Thyroid gland (tissue), 4 donors: ENCODE measurements at regions of chr15 and their contacts with region 1.

Region 1: GRCh38 chr15:90618330-90619125 is 88.8 kb downstream of the CRTC3 start:
- DNase-seq: peak; percentile 56 to 67
- H3K4me3 ChIP-seq: no peak overlapping the region
- H3K27ac ChIP-seq: peak overlapping the region; percentile 75 to 89 (median 87)
- H3K4me1 ChIP-seq: peaks cover 23 to 29% of the 10 kb centered on the region in 2 donors
- H3K27me3 ChIP-seq: no peaks in the 10 kb centered on the region
- CTCF ChIP-seq: no peak
- POLR2A ChIP-seq: no peak

Region 2: GRCh38 chr15:90362936-90363212 is 255.7 kb before region 1 on chr15:
- intact Hi-C with region 1: no loop called
- DNase-seq: no peak
- H3K4me3 ChIP-seq: no peak overlapping the region
- H3K27ac ChIP-seq: no peak overlapping the region
- H3K4me1 ChIP-seq: peaks cover 6 to 16% of the 10 kb centered on the region in 2 donors
- H3K27me3 ChIP-seq: no peaks in the 10 kb centered on the region
- CTCF ChIP-seq: no peak
- POLR2A ChIP-seq: no peak

Region 3: GRCh38 chr15:90529371-90530249 is 88.9 kb before region 1 on chr15 and contains the start of gene CRTC3:
- intact Hi-C with region 1: loop called (anchors 10 kb)
- DNase-seq: peak; percentile 57 to 61
- H3K4me3 ChIP-seq: peak within 1 kb of the TSS; percentile 9 to 85 (median 50)
- H3K27ac ChIP-seq: peak within 1 kb of the TSS; percentile 70 to 96 (median 93)
- H3K4me1 ChIP-seq: peaks cover 17 to 24% of the 10 kb centered on the region in 2 donors
- H3K27me3 ChIP-seq: no peaks in the 10 kb centered on the region
- CTCF ChIP-seq: no peak
- POLR2A ChIP-seq: peak; percentile 23 to 86
- total RNA-seq, gene CRTC3: 49.4 to 76.0 (median 62.6) TPM